HCT116 (cell line): ENCODE measurements at regions of chr5 and their contacts with region 1.

Region 1: DNA sequence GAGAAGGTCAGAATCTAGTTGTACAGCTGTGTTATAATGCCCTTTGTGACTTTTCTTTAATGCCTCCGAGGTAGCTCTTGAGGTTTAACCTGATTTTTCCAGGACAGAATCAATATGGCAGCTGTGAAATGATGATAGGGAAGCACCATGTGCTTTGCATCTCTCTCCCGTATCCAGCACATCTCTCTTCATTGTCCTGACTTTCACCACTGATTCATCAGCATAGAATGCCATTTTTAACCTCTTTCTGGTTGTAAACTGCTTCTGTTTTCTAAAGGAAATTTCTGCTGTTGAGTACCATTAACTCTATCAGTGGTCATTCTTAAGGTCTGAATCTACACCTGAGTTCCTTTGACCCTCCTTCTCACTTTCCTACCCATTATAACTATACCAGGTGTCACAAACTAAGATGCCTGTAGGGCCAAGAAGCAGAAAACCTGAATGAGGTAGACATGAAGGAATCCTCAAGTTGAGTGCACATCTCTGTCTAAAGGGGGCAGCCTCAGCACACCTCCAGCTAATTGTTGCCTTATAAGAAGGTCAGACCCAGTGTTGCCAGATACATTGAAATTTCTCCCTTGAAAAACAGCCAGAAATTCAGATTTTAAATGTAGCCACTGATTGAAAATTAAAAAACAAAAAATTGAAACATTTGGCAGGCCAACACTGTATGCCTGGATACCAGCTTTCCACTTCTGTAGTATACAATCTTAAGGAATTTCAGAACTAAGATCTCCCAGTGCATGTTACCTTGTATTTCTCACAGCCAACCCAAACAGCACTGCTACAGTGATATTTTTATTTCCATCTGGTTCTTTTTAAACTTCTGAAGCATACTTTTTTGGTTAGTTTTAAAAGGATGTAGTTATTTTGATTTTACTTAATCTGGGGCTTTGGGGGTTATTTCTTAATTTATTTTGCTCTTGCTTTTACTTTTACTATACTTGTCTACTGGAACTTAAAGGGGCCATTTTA is 35.8 kb upstream of the TLX3 start:
- DNase-seq: peak; percentile 44
- ATAC-seq: peak; percentile 97
- H3K4me3 ChIP-seq: no peak overlapping the region
- H3K27ac ChIP-seq: no peak overlapping the region
- H3K4me1 ChIP-seq: no peaks in the 10 kb centered on the region
- H3K27me3 ChIP-seq: no peaks in the 10 kb centered on the region
- CTCF ChIP-seq: peak; percentile 61 to 63 (median 63)
- POLR2A ChIP-seq: no peak
- RAD21 ChIP-seq: peak; percentile 75

Region 2: DNA sequence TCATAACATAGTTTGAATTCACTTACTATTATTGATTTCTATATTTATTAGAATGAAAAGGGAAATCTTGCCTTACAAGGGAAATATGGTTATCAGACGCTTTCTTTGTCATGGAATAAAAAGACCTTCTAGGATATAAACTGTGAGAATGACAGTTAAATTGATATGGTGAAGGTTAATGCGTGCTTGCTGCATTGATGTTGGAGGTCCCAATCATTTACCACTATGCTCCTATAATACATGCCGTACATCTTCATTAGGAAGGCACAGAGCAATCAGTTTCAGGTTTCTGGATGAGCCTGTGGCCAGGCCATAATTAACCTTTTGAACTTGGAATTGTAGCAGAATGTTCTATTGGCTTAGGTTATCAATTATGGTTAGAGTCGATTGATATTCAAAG is 165.6 kb before region 1 on chr5:
- CTCF ChIA-PET with region 1: no interaction called
- POLR2A ChIA-PET with region 1: no interaction called
- RAD21 ChIA-PET with region 1: no interaction called
- intact Hi-C with region 1: no loop called
- DNase-seq: no peak
- ATAC-seq: no peak
- H3K4me3 ChIP-seq: no peak overlapping the region
- H3K27ac ChIP-seq: no peak overlapping the region
- H3K4me1 ChIP-seq: no peaks in the 10 kb centered on the region
- H3K27me3 ChIP-seq: no peaks in the 10 kb centered on the region
- CTCF ChIP-seq: no peak
- POLR2A ChIP-seq: no peak
- RAD21 ChIP-seq: no peak

Region 3: GRCh38 chr5:171261361-171261760 is 11.9 kb before region 1 on chr5:
- CTCF ChIA-PET with region 1: interaction called, 10 read pairs
- POLR2A ChIA-PET with region 1: no interaction called
- RAD21 ChIA-PET with region 1: no interaction called
- intact Hi-C with region 1: no loop called
- DNase-seq: no peak
- ATAC-seq: no peak
- H3K4me3 ChIP-seq: no peak overlapping the region
- H3K27ac ChIP-seq: no peak overlapping the region
- H3K4me1 ChIP-seq: no peaks in the 10 kb centered on the region
- H3K27me3 ChIP-seq: no peaks in the 10 kb centered on the region
- CTCF ChIP-seq: no peak
- POLR2A ChIP-seq: no peak
- RAD21 ChIP-seq: no peak

Region 4: GRCh38 chr5:172266676-172267092 is 993.4 kb after region 1 on chr5:
- CTCF ChIA-PET with region 1: no interaction called
- POLR2A ChIA-PET with region 1: no interaction called
- RAD21 ChIA-PET with region 1: no interaction called
- intact Hi-C with region 1: no loop called
- DNase-seq: no peak
- ATAC-seq: no peak
- H3K4me3 ChIP-seq: no peak overlapping the region
- H3K27ac ChIP-seq: no peak overlapping the region
- H3K4me1 ChIP-seq: no peaks in the 10 kb centered on the region
- H3K27me3 ChIP-seq: no peaks in the 10 kb centered on the region
- CTCF ChIP-seq: no peak
- POLR2A ChIP-seq: no peak
- RAD21 ChIP-seq: no peak